Ascending aorta (tissue), 2 donors: ENCODE measurements at regions of chr15 and their contacts with region 1.

Region 1: GRCh38 chr15:88897456-88898194 is 2.3 kb upstream of the HAPLN3 start:
- DNase-seq: peak; percentile 68 to 94
- H3K4me3 ChIP-seq: peak overlapping the region in 1 of 2 donors; percentile 28
- H3K27ac ChIP-seq: peak overlapping the region; percentile 81 to 83
- H3K4me1 ChIP-seq: peaks cover 3 to 68% of the 10 kb centered on the region in 2 donors
- H3K27me3 ChIP-seq: no peaks in the 10 kb centered on the region
- CTCF ChIP-seq: peak; percentile 70 to 80 (median 71)

Region 2: GRCh38 chr15:89197503-89197971 is 299.9 kb after region 1 on chr15:
- intact Hi-C with region 1: loop called (anchors 5 kb)
- DNase-seq: no peak
- H3K4me3 ChIP-seq: no peak overlapping the region
- H3K27ac ChIP-seq: peak overlapping the region; percentile 75 to 85
- H3K4me1 ChIP-seq: peaks cover 0 to 17% of the 10 kb centered on the region in 2 donors
- H3K27me3 ChIP-seq: no peaks in the 10 kb centered on the region
- CTCF ChIP-seq: no peak

Region 3: GRCh38 chr15:89334510-89335288 is 437.1 kb after region 1 on chr15 and contains the start of gene POLG:
- intact Hi-C with region 1: loop called (anchors 10 kb)
- DNase-seq: peak; percentile 96 to 99
- H3K4me3 ChIP-seq: peak within 1 kb of the TSS; percentile 76 to 96
- H3K27ac ChIP-seq: peak within 1 kb of the TSS; percentile 88 to 93
- H3K4me1 ChIP-seq: peaks cover 14 to 38% of the 10 kb centered on the region in 2 donors
- H3K27me3 ChIP-seq: no peaks in the 10 kb centered on the region
- CTCF ChIP-seq: no peak
- total RNA-seq, gene POLG: 69.1 TPM